Activated B cell treated with CpG ODN at 0.5 μM for 24 hours (primary cell): ENCODE measurements at regions of chr5 and their contacts with region 1.

Region 1: GRCh38 chr5:33588654-33589372 is 148.0 kb downstream of the TARS1 start:
- DNase-seq: no peak
- ATAC-seq: no peak
- H3K4me3 Mint-ChIP-seq: no peak overlapping the region
- H3K27ac Mint-ChIP-seq: no peak overlapping the region
- H3K4me1 Mint-ChIP-seq: no peaks in the 10 kb centered on the region
- H3K27me3 Mint-ChIP-seq: no peaks in the 10 kb centered on the region
- CTCF ChIP-seq: no peak

Region 2: DNA sequence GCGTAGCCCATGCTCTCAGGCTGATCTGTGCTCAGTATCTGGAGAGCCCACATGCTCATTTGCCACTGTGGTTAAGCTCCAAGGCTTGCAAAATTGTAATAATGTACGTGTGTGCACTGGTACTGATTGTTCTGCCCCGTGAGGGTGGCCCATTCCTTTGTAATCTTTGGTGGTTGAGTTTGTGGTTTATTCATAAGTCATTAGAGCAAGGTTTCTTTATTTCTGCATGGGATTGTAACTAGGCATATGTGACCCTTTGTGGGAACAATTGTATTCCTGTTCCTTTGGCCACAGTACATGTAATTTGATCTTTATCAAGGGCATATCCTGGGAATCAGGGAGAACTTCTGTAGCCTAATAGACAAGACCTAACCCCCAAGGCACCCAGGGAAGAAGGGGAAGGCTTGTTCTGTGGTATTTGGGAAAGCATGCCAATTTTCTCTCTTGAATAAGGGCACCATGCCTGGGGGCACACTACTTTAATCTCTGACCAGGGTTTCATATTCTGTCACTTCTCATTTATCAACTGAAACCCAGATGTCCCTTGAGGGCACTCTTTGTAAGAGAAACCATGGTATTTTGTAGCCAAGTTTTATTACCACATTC is 803.1 kb before region 1 on chr5:
- CTCF ChIA-PET with region 1: no interaction called
- POLR2A ChIA-PET with region 1: no interaction called
- intact Hi-C with region 1: no loop called
- DNase-seq: no peak
- ATAC-seq: no peak
- H3K4me3 Mint-ChIP-seq: no peak overlapping the region
- H3K27ac Mint-ChIP-seq: no peak overlapping the region
- H3K4me1 Mint-ChIP-seq: no peaks in the 10 kb centered on the region
- H3K27me3 Mint-ChIP-seq: peaks cover 3% of the 10 kb centered on the region
- CTCF ChIP-seq: no peak

Region 3: DNA sequence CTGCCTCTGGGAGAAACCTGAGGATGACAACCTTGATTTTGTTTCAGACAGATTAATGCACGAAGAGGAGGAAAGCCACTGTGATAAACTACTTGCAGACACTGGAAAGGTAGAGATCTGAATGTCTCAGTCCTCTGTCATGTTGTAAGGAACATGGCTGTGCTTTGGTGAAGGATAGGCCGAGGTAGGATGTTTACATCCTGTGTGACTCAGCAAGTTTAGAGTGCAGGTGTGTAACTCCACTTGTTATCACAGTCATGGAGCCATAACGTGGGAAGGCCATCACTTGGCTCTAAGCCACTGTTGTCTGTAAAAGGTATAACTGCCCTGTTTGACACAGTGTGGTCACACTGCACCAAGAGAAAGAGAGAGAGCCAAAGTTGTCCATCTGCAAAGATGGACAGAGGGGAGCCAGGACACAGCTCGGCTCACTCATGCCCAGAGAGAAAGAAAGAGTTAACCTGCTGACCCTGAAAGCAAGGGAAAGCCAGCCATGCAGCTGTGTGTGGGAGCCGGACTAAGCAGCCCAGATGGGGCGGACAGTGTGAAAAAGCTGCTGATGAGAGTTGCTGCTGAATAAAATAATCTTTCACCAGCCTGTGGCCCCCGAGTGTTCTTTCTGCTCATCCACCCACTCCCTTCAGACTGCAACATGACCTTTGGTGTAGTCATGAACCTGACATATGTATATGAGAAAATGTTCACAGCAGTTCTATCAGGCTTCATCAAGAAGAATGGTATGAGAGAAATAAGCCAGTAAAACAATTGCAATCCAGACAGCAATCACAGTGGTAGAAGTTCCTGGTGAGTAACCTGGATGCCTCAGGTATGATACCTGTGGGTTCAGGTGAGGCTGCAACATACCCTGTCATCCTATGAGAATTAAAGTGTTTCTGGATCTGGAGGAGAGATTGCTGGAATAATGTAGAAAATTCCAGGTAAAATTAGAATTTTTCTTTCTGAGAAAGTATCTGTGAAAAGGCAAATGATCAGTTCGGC is 32.2 kb before region 1 on chr5:
- CTCF ChIA-PET with region 1: no interaction called
- POLR2A ChIA-PET with region 1: no interaction called
- intact Hi-C with region 1: no loop called
- DNase-seq: no peak
- ATAC-seq: no peak
- H3K4me3 Mint-ChIP-seq: no peak overlapping the region
- H3K27ac Mint-ChIP-seq: no peak overlapping the region
- H3K4me1 Mint-ChIP-seq: no peaks in the 10 kb centered on the region
- H3K27me3 Mint-ChIP-seq: no peaks in the 10 kb centered on the region
- CTCF ChIP-seq: no peak

Region 4: DNA sequence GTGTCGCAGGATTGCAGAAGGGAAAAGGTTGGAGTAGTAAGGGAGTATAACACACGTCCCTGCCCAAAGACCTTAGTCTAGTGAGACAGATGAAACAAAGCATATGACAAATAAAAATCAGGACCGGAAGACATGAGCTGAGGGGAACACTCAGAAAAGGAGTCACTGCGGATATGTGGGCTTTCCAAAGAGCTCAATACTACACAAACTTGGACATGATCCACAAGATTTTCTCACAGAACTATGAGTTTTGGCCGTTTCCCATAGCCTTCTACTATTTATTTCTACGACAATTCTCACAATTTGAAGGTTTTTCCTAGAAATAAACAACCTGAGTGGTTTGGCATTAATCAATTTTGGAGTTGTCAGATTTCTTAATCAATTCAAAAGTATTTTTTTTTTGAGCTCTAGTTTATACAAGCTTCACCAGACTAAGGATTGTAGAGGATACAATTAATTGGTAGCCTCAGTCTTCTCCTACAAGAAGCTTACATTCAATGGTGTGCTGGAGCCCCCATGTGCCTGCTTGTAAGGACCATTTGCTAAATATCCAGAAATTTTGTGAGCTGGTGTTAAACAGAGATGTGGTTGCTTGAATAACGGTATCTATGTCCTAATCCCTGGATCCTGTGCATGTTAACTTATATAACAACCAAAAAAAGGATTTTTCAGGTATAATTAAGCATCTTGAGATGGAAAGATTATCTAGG is 211.6 kb after region 1 on chr5:
- CTCF ChIA-PET with region 1: interaction called, 6 read pairs
- POLR2A ChIA-PET with region 1: no interaction called
- intact Hi-C with region 1: loop called (anchors 1 kb)
- DNase-seq: no peak
- ATAC-seq: no peak
- H3K4me3 Mint-ChIP-seq: no peak overlapping the region
- H3K27ac Mint-ChIP-seq: no peak overlapping the region
- H3K4me1 Mint-ChIP-seq: no peaks in the 10 kb centered on the region
- H3K27me3 Mint-ChIP-seq: peaks cover 3% of the 10 kb centered on the region
- CTCF ChIP-seq: no peak

Region 5: DNA sequence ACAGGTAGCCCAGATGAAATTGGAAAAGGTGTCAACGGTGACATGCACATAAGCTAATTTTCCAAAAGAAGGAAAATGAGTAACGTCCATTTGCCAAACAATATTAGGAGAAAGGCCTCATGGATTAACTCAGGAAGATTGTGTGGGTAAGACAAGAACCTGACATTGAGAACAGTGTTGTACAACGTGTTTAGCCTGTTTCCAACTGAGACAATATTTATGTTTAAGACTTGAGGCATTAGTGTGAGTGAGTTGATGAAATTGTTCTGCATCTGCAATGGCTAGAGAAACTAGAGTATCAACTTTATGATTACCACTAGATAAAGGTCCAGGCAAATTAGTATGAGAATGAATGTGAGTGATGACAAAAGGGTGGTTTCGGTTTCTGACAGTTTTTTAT is 876.0 kb after region 1 on chr5:
- CTCF ChIA-PET with region 1: no interaction called
- POLR2A ChIA-PET with region 1: no interaction called
- intact Hi-C with region 1: loop called (anchors 2 kb)
- DNase-seq: no peak
- ATAC-seq: no peak
- H3K4me3 Mint-ChIP-seq: no peak overlapping the region
- H3K27ac Mint-ChIP-seq: no peak overlapping the region
- H3K4me1 Mint-ChIP-seq: peaks cover 4% of the 10 kb centered on the region
- H3K27me3 Mint-ChIP-seq: no peaks in the 10 kb centered on the region
- CTCF ChIP-seq: no peak